ENCODE measurements at regions of chr22 and their contacts with region 1.

Region 1: DNA sequence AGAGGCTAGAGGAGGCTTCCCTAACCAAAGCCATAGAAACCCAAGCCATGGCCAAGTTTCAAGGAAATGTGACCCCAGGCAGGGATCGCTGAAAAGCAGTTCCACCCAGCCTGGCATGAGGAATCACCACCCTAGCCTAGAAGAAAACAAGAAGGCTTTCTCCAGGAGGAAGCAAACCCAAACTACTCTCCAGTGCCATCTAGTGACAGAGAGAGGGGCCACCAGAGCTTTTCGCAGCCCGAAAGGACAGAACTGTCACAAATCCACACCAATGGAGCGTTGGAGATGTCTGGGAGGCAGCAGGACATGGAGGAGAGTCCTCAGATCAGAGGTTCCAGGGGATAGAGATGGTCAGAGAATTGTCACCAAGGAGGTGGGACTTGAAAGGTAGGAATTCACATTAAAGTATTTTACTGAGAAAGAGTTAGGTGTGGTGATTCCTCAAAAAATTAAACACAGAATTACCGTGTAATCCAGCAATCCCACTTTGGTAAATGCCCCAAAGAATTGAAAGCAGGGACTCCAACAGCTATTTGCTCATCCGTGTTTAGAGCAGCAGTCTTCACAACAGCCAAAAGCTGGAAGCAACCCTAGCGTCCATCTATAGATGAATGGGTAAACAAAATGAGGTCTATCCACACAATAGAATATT is 67.3 kb upstream of the NUP50 start:
- DNase-seq: peak; percentile 57 to 60 (median 59)
- ATAC-seq: peak; percentile 69
- H3K4me3 ChIP-seq: no peak overlapping the region
- H3K27ac ChIP-seq: no peak overlapping the region
- H3K4me1 ChIP-seq: no peaks in the 10 kb centered on the region
- H3K27me3 ChIP-seq: peaks cover 0 to 6% of the 10 kb centered on the region in 2 donors
- CTCF ChIP-seq: peak; percentile 51 to 74 (median 68)
- POLR2A ChIP-seq: no peak

Region 2: DNA sequence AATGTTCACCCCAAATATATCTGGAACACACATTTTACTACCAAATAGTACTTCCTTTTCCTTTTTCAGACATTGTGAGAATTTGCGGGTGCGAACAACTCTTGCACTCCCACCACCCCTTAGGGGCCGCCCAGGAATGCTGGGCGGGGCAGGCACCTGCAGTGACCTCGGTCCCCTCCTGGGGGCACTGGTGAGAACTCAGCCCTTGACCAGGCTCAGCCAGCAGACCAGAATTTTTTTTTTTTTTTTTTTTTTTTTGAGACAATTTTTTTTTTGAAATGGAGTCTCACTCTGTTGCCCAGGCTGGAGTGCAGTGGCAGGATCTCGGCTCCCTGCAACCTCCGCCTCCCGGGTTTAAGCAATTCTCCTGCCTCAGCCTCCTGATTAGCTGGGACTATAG is 268.2 kb before region 1 on chr22:
- intact Hi-C with region 1: loop called (anchors 10 kb)
- DNase-seq: no peak
- ATAC-seq: no peak
- H3K4me3 ChIP-seq: no peak overlapping the region
- H3K27ac ChIP-seq: no peak overlapping the region
- H3K4me1 ChIP-seq: no peaks in the 10 kb centered on the region
- H3K27me3 ChIP-seq: no peaks in the 10 kb centered on the region
- CTCF ChIP-seq: peak in 4 of 7 experiments; percentile 10 to 17 (median 14)
- POLR2A ChIP-seq: no peak

Region 3: GRCh38 chr22:45163451-45164269 is 67.3 kb after region 1 on chr22 and contains the start of gene NUP50:
- intact Hi-C with region 1: no loop called
- DNase-seq: peak; percentile 96 to 98 (median 96)
- ATAC-seq: peak; percentile 96
- H3K4me3 ChIP-seq: peak within 1 kb of the TSS; percentile 92 to 99
- H3K27ac ChIP-seq: peak within 1 kb of the TSS; percentile 84 to 92 (median 90)
- H3K4me1 ChIP-seq: peaks cover 56% of the 10 kb centered on the region
- H3K27me3 ChIP-seq: no peaks in the 10 kb centered on the region
- CTCF ChIP-seq: peak in 2 of 7 experiments; percentile 12 to 22
- POLR2A ChIP-seq: peak; percentile 53 to 86 (median 83)
- total RNA-seq, gene NUP50: 39.2 to 43.1 TPM

Region 4: GRCh38 chr22:45208993-45209801 is 112.8 kb after region 1 on chr22:
- intact Hi-C with region 1: no loop called
- DNase-seq: no peak
- ATAC-seq: no peak
- H3K4me3 ChIP-seq: no peak overlapping the region
- H3K27ac ChIP-seq: no peak overlapping the region
- H3K4me1 ChIP-seq: peaks cover 20% of the 10 kb centered on the region
- H3K27me3 ChIP-seq: no peaks in the 10 kb centered on the region
- CTCF ChIP-seq: peak in 5 of 7 experiments; percentile 10 to 38 (median 31)
- POLR2A ChIP-seq: no peak

Region 5: DNA sequence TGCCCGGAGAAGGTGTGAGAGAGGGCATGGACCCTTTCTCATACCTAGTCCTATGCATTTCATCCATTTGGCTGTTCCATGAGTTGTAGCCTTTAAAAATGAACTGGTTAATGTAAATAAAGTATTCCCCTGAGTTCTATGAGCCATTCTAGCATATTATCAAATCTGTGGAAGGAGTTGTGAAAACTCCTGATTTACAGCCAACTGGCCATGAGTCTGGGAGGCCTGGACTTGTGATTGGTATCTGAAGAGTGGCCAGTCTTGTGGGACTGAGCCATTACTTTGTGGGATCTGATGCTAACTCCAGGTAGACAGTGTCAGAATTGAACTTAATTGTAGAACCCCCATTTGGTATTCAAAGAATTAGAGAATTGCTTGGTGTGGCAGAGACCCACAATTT is 261.7 kb after region 1 on chr22:
- intact Hi-C with region 1: no loop called
- DNase-seq: no peak
- ATAC-seq: no peak
- H3K4me3 ChIP-seq: no peak overlapping the region
- H3K27ac ChIP-seq: no peak overlapping the region
- H3K4me1 ChIP-seq: no peaks in the 10 kb centered on the region
- H3K27me3 ChIP-seq: no peaks in the 10 kb centered on the region
- CTCF ChIP-seq: no peak
- POLR2A ChIP-seq: no peak

Measured in body of pancreas (tissue), 4 donors.